ENCODE measurements at regions of chr10 and their contacts with region 1.

Region 1: DNA sequence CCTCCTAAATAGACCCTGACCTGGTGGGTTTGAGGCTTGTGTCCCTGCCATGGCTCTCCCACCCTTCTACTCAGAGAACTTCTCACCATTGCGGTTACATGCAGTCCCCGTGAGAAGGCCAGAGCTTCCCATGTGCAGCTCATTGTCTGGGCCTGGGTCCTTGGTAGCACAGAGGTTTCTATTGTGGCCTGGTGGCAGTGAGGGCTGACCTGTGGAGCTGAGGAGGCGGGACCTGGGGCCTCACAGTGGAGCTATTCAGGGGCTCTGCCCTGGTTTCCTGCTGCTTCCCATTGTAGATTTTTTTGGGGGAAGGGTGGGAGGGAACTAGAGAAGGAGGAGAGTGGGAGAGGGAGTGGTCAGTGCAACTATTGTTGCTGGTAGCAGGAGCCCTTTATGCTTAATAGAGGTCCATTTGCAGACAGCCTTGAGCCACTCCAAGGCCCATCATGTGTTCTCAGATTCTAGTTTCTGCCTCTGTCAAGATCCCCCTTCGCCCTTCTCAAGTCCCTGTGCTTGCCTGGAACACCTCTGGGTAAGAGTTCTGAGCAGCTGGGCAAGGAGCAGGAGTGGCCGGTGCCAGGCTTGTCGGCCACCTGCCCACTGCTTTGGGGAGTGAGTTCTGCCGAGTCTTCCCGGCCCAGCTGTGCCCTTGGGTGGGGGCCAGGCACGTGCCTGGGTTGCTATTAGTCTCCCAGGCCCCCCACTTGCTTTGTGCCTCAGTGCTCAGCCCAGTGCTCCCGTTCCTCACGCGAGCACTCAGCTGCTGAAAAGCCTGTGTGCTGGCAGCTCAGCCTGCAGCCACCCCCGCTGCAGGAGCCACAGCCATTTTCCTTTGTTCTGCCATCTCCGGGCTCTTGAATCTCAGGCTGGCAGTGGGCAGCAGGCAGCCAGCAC is 10.7 kb downstream of the TSPAN14 start:
- DNase-seq: no peak
- ATAC-seq: peak; percentile 38; the same call in 1 of the 2 replicates
- H3K4me3 ChIP-seq: no peak overlapping the region
- H3K27ac ChIP-seq: no peak overlapping the region
- H3K4me1 ChIP-seq: peaks cover 25% of the 10 kb centered on the region
- H3K27me3 ChIP-seq: no peaks in the 10 kb centered on the region
- CTCF ChIP-seq: no peak

Region 2: GRCh38 chr10:80500572-80501380 is 36.0 kb after region 1 on chr10:
- CTCF ChIA-PET with region 1: interaction called, 17 read pairs
- POLR2A ChIA-PET with region 1: interaction called, 11 read pairs
- in situ Hi-C with region 1: no loop called
- intact Hi-C with region 1: no loop called
- DNase-seq: no peak
- ATAC-seq: no peak
- H3K4me3 ChIP-seq: no peak overlapping the region
- H3K27ac ChIP-seq: no peak overlapping the region
- H3K4me1 ChIP-seq: peaks cover 26% of the 10 kb centered on the region
- H3K27me3 ChIP-seq: no peaks in the 10 kb centered on the region
- CTCF ChIP-seq: no peak

Region 3: GRCh38 chr10:80552151-80552646 is 87.4 kb after region 1 on chr10:
- CTCF ChIA-PET with region 1: no interaction called
- POLR2A ChIA-PET with region 1: no interaction called
- in situ Hi-C with region 1: no loop called
- intact Hi-C with region 1: no loop called
- DNase-seq: no peak
- ATAC-seq: peak; percentile 64
- H3K4me3 ChIP-seq: no peak overlapping the region
- H3K27ac ChIP-seq: no peak overlapping the region
- H3K4me1 ChIP-seq: no peaks in the 10 kb centered on the region
- H3K27me3 ChIP-seq: peaks cover 9% of the 10 kb centered on the region
- CTCF ChIP-seq: no peak